Heart right ventricle (tissue), 16 donors: ENCODE measurements at regions of chr4 and their contacts with region 1.

Region 1: DNA sequence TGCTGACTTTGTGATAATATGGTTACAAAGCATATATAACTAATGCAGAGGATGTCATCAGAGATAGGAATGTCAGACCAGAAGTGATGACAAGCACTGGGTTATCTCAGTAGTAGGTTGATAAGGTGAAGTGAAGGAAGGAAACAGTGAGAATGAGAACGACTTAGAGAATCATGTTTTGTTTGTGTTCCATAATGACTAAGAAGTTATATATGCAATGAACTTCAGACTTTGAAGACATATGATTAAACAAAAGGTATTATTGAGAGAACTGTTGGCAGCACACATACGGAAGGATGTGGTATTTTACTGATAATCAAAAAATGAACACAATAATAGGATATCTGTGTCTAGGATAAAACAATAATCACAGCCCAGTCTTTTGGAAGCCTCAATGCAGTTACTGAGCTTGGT is 18.3 kb upstream of the HHIP start:
- DNase-seq: no peak
- ATAC-seq: no peak
- H3K4me3 ChIP-seq: no peak overlapping the region
- H3K27ac ChIP-seq: no peak overlapping the region
- H3K4me1 ChIP-seq: no peaks in the 10 kb centered on the region
- H3K27me3 ChIP-seq: no peaks in the 10 kb centered on the region
- CTCF ChIP-seq: no peak

Region 2: DNA sequence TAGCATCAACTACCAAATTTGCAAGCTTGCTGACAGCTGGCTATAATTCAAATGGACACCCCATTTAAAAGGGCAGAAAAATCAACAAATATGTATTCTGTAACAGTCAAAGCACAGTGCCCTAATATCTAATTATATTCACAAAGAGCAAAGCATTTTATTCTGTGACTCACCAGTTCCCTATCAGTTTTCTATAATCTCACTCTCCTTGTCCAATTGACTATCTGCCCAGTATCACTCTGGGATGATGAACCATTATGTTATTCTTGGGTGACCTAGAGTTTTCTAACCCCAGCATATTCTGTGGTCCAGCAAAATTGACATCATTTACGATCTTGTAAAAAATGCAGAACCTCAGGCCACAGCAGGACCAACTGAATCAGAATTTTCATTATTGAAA is 845.1 kb before region 1 on chr4:
- intact Hi-C with region 1: loop called in 1 of 10 experiments (anchors 10 kb)
- DNase-seq: no peak
- ATAC-seq: no peak
- H3K4me3 ChIP-seq: no peak overlapping the region
- H3K27ac ChIP-seq: no peak overlapping the region
- H3K4me1 ChIP-seq: no peaks in the 10 kb centered on the region
- H3K27me3 ChIP-seq: no peaks in the 10 kb centered on the region
- CTCF ChIP-seq: no peak

Region 3: GRCh38 chr4:144583658-144584057 is 44.0 kb before region 1 on chr4:
- intact Hi-C with region 1: no loop called
- DNase-seq: no peak
- ATAC-seq: no peak
- H3K4me3 ChIP-seq: no peak overlapping the region
- H3K27ac ChIP-seq: no peak overlapping the region
- H3K4me1 ChIP-seq: no peaks in the 10 kb centered on the region
- H3K27me3 ChIP-seq: no peaks in the 10 kb centered on the region
- CTCF ChIP-seq: no peak